ENCODE measurements at regions of chr2 and their contacts with region 1.

Region 1: GRCh38 chr2:11129598-11130449 is 25.4 kb upstream of the SLC66A3 start:
- DNase-seq: peak; percentile 90 to 95
- H3K4me3 ChIP-seq: peak overlapping the region; percentile 42
- H3K4me3 Mint-ChIP-seq: peak overlapping the region; percentile 68
- H3K27ac Mint-ChIP-seq: no peak overlapping the region
- H3K4me1 ChIP-seq: peaks cover 5% of the 10 kb centered on the region
- H3K4me1 Mint-ChIP-seq: no peaks in the 10 kb centered on the region
- H3K27me3 ChIP-seq: no peaks in the 10 kb centered on the region
- H3K27me3 Mint-ChIP-seq: no peaks in the 10 kb centered on the region
- CTCF ChIP-seq: peak; percentile 56 to 79

Region 2: DNA sequence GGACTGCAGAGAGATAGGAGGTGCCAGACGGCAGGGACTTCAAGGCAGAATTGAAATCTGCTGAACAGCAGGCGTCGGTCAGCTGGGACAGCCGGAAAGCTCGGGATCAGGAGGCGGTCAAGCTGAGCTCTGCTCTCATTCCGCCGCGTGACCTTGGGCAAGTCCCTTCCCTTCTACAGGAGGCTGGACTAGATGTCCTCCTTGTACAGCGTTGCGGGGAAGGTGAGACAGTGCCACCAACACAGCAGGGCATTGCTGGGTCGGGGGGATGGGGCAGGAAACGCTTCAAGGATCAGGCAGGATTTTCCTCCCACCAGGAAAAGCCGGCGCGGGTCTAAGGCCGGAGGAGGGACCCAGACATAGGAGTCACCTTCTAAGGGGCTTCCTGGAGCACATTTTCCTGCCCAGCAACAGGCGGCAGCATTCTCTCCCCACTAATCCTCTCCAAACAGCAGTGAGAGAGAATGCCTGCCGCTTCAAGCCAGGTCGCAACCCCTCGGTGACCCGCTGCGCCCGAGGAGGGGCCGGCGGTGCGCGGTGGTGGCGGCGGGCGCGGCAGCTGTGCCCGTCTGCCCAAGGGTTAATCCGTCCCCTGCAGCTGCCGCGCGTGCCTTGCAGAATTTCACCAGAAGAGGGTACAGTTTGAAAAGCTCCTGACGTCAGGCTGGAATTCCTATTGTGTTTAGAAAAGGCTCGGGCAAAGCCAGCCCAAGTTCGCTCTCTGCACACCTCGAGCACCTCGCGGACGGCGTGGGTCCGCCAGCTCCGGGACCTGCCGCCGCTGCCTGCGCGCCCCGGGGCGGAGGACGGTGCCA is 218.4 kb before region 1 on chr2 and contains the start of gene KCNF1:
- CTCF ChIA-PET with region 1: interaction called, 8 read pairs
- POLR2A ChIA-PET with region 1: no interaction called
- intact Hi-C with region 1: loop called (anchors 5 kb)
- DNase-seq: peak; percentile 64 to 72
- H3K4me3 ChIP-seq: peak within 1 kb of the TSS; percentile 42
- H3K4me3 Mint-ChIP-seq: peak within 1 kb of the TSS; percentile 58
- H3K27ac Mint-ChIP-seq: no peak within 1 kb of the TSS
- H3K4me1 ChIP-seq: no peaks in the 10 kb centered on the region
- H3K4me1 Mint-ChIP-seq: peaks cover 7% of the 10 kb centered on the region
- H3K27me3 ChIP-seq: no peaks in the 10 kb centered on the region
- H3K27me3 Mint-ChIP-seq: peaks cover 10% of the 10 kb centered on the region
- CTCF ChIP-seq: peak; percentile 25 to 26
- total RNA-seq, gene KCNF1: 0.28 and 0.29 TPM in 2 replicates

Region 3: DNA sequence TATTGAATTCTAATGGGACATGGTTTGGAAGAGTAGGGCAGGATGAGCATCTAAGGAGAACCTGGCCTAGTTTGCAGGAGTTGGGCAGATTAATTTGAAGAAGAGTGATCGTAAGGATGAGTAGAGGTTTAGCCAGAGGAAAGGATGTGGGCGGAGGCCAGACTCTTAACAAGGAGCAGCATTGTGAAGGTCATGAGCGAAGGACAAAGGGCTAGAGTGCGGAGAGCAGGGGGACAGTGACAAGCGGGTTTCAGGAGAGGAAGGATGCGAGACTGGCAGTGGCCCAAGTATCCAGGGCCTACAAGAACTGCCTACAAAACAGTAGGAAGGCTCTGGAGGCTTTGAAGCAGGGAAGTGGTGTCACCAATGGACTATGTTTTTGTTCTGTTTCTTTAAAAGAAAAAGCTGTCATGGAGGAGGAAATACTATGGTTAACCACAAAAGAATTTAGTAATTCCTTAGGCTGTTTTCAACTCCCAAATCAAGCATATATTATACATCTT is 45.5 kb after region 1 on chr2:
- CTCF ChIA-PET with region 1: interaction called, 4 read pairs
- POLR2A ChIA-PET with region 1: interaction called, 4 read pairs
- intact Hi-C with region 1: loop called (anchors 5 kb)
- DNase-seq: no peak
- H3K4me3 ChIP-seq: no peak overlapping the region
- H3K4me3 Mint-ChIP-seq: no peak overlapping the region
- H3K27ac Mint-ChIP-seq: no peak overlapping the region
- H3K4me1 ChIP-seq: no peaks in the 10 kb centered on the region
- H3K4me1 Mint-ChIP-seq: no peaks in the 10 kb centered on the region
- H3K27me3 ChIP-seq: no peaks in the 10 kb centered on the region
- H3K27me3 Mint-ChIP-seq: no peaks in the 10 kb centered on the region
- CTCF ChIP-seq: no peak

Region 4: GRCh38 chr2:11224887-11225286 is 95.1 kb after region 1 on chr2:
- CTCF ChIA-PET with region 1: no interaction called
- POLR2A ChIA-PET with region 1: no interaction called
- intact Hi-C with region 1: loop called (anchors 5 kb)
- DNase-seq: no peak
- H3K4me3 ChIP-seq: no peak overlapping the region
- H3K4me3 Mint-ChIP-seq: no peak overlapping the region
- H3K27ac Mint-ChIP-seq: no peak overlapping the region
- H3K4me1 ChIP-seq: no peaks in the 10 kb centered on the region
- H3K4me1 Mint-ChIP-seq: no peaks in the 10 kb centered on the region
- H3K27me3 ChIP-seq: no peaks in the 10 kb centered on the region
- H3K27me3 Mint-ChIP-seq: no peaks in the 10 kb centered on the region
- CTCF ChIP-seq: no peak

Region 5: GRCh38 chr2:11417946-11418585 is 288.2 kb after region 1 on chr2:
- CTCF ChIA-PET with region 1: interaction called, 15 read pairs
- POLR2A ChIA-PET with region 1: no interaction called
- intact Hi-C with region 1: no loop called
- DNase-seq: peak; percentile 63 to 77
- H3K4me3 ChIP-seq: no peak overlapping the region
- H3K4me3 Mint-ChIP-seq: no peak overlapping the region
- H3K27ac Mint-ChIP-seq: no peak overlapping the region
- H3K4me1 ChIP-seq: no peaks in the 10 kb centered on the region
- H3K4me1 Mint-ChIP-seq: no peaks in the 10 kb centered on the region
- H3K27me3 ChIP-seq: no peaks in the 10 kb centered on the region
- H3K27me3 Mint-ChIP-seq: no peaks in the 10 kb centered on the region
- CTCF ChIP-seq: peak; percentile 84 to 85

Region 6: GRCh38 chr2:11583840-11584524 is 454.2 kb after region 1 on chr2:
- CTCF ChIA-PET with region 1: interaction called, 7 read pairs
- POLR2A ChIA-PET with region 1: no interaction called
- intact Hi-C with region 1: loop called (anchors 1 kb)
- DNase-seq: peak; percentile 66 to 77
- H3K4me3 ChIP-seq: no peak overlapping the region
- H3K4me3 Mint-ChIP-seq: no peak overlapping the region
- H3K27ac Mint-ChIP-seq: no peak overlapping the region
- H3K4me1 ChIP-seq: 0 out of 2 replicates have a peak, but pooled peaks cover 14% of the 10 kb centered on the region
- H3K4me1 Mint-ChIP-seq: no peaks in the 10 kb centered on the region
- H3K27me3 ChIP-seq: no peaks in the 10 kb centered on the region
- H3K27me3 Mint-ChIP-seq: no peaks in the 10 kb centered on the region
- CTCF ChIP-seq: peak; percentile 84 to 86

Measured in Caco-2 (cell line).